Activated B cell treated with CpG ODN at 0.5 μM for 24 hours (primary cell): ENCODE measurements at regions of chr7 and their contacts with region 1.

Region 1: DNA sequence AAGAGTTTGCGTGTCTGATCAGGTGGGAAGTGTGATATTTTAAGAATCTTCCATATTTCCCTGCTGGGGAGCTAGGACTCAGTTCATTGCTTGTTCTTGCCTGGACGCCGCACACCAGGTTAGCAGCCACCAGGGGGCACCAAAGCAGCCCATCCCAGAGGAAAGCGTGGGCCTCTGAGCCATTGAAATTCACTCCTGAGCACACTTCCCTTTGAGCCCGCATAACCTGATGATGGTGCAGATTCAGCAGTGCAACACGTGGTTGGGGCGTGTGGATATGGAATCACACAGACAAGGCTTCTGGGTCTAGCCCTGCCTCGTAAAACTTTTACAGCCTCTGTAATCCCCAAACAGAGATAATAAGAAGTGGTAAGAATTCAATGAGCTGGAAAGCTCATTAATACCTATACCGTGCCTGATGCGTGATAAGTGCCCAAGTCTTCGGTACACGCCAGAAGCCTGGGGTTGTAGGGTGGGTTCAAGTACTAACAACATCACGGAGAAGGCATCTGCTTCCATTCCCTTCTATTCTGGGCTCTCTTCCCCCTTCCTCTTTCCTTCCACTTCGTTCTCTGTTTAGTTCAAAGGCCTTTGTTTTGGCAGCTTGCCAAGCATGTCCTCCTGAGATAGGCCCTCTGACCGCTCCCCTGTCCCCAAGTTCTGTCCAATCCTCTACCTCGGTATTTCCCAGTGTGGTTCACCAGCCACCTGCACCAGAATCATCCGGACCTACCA is 130.1 kb upstream of the KMT2E start:
- DNase-seq: peak; percentile 57
- ATAC-seq: peak; percentile 84
- H3K4me3 Mint-ChIP-seq: no peak overlapping the region
- H3K27ac Mint-ChIP-seq: no peak overlapping the region
- H3K4me1 Mint-ChIP-seq: peaks cover 6% of the 10 kb centered on the region
- H3K27me3 Mint-ChIP-seq: peaks cover 1% of the 10 kb centered on the region
- CTCF ChIP-seq: peak; percentile 21

Region 2: DNA sequence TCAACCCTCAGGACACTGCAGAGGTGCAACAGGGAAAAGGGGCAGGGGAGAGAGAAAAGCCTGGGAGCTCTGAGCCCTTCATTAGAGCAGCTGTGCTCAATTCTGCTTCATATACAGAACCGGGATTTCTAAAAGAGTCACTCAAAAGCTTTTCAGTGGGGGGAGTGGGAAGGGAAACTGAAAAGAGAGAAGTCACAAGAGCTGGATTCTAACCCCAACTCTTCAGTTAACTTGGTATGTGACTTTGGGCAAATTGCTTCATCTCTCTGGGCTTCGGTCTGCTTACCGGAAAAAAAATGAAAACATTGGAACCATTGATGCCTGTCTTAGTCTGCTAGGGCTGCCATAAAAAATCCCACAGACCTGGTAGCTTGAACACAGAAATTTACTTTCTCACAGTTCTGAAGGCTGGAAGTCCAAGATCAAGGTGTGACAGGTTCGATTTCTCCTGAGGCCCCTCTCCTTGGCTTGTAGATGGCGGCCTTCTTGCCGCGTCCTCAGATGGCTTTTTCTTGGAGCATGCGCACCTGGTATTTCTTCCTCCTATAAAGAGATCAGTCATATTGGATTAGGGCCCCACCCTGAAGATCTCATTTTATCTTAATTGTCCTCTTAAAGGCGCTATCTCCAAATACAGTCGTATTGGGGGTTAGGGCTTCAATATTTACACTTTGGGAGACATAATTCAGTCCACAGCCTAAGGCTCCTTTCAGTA is 11.8 kb after region 1 on chr7:
- CTCF ChIA-PET with region 1: interaction called, 26 read pairs
- POLR2A ChIA-PET with region 1: no interaction called
- intact Hi-C with region 1: no loop called
- DNase-seq: no peak
- ATAC-seq: no peak
- H3K4me3 Mint-ChIP-seq: no peak overlapping the region
- H3K27ac Mint-ChIP-seq: no peak overlapping the region
- H3K4me1 Mint-ChIP-seq: peaks cover 2% of the 10 kb centered on the region
- H3K27me3 Mint-ChIP-seq: no peaks in the 10 kb centered on the region
- CTCF ChIP-seq: no peak

Region 3: DNA sequence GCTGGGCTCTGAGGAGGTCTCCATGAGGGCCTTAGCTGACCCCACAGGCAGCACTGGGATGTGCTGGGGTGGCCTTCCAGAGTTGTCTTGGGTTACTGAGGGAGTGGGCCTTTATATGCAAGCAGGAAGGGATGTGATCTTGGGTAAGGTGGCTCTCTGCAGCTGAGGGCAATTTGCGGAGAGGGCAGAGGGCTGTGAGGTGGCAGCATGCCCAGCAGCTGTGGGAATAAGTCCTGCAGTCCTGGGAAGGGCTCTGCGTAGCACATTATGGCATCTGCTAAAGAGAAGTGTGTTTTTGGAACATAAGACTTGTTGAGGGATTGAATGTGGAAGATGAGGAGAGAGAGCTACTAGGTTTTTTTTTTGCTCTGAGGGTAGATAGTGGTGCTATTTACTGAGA is 30.5 kb after region 1 on chr7:
- CTCF ChIA-PET with region 1: interaction called, 129 read pairs
- POLR2A ChIA-PET with region 1: no interaction called
- intact Hi-C with region 1: loop called (anchors 1 kb)
- DNase-seq: no peak
- ATAC-seq: no peak
- H3K4me3 Mint-ChIP-seq: no peak overlapping the region
- H3K27ac Mint-ChIP-seq: no peak overlapping the region
- H3K4me1 Mint-ChIP-seq: no peaks in the 10 kb centered on the region
- H3K27me3 Mint-ChIP-seq: no peaks in the 10 kb centered on the region
- CTCF ChIP-seq: no peak

Region 4: GRCh38 chr7:105448181-105448580 is 564.3 kb after region 1 on chr7:
- CTCF ChIA-PET with region 1: no interaction called
- POLR2A ChIA-PET with region 1: no interaction called
- intact Hi-C with region 1: no loop called
- DNase-seq: no peak
- ATAC-seq: peak; percentile 59
- H3K4me3 Mint-ChIP-seq: peak overlapping the region; percentile 60
- H3K27ac Mint-ChIP-seq: peak overlapping the region; percentile 89
- H3K4me1 Mint-ChIP-seq: peaks cover 74% of the 10 kb centered on the region
- H3K27me3 Mint-ChIP-seq: no peaks in the 10 kb centered on the region
- CTCF ChIP-seq: no peak

Region 5: DNA sequence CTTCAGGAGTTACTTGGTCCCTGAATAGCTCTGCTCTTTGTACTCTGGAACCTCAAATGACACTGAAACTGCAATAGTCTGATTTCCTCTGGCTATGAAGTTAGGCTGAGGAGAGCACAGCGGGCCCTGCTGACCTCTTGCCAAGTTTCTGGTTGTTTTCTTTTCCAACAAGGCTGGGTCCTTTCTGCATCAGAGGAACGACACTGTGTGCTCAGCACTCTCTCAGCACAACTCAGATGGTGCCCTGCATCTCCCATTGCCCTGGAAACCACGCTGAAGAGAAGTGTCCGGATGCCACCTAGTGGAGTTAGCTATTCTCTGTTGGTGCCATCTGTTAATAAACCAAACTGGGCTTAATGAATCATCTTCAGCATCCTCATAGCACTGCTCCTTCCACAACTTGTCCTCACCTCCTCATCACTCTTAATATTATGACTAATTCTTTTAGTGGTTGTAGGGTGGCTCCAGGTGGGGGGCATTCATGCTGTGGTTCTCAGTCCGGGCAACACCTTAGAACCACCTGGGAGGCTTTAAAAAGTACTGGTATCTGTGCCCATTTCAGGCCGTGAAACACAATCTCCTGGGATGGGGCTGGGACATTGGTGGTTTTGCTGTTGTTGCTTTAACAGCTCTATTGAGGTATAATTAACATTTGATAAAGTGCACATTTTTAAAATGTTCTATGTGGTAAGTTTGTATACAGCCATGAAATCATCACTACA is 705.6 kb after region 1 on chr7:
- CTCF ChIA-PET with region 1: interaction called, 5 read pairs
- POLR2A ChIA-PET with region 1: no interaction called
- intact Hi-C with region 1: loop called (anchors 1 kb)
- DNase-seq: no peak
- ATAC-seq: peak; percentile 89
- H3K4me3 Mint-ChIP-seq: no peak overlapping the region
- H3K27ac Mint-ChIP-seq: peak overlapping the region; percentile 27
- H3K4me1 Mint-ChIP-seq: peaks cover 38% of the 10 kb centered on the region
- H3K27me3 Mint-ChIP-seq: no peaks in the 10 kb centered on the region
- CTCF ChIP-seq: no peak